Aorta (tissue), 5 donors: ENCODE measurements at regions of chr6 and their contacts with region 1.

Region 1: GRCh38 chr6:125974214-125974866 is 12.0 kb upstream of the TRMT11 start:
- DNase-seq: no peak
- ATAC-seq: no peak
- H3K4me3 ChIP-seq: no peak overlapping the region
- H3K27ac ChIP-seq: no peak overlapping the region
- H3K4me1 ChIP-seq: no peaks in the 10 kb centered on the region
- H3K27me3 ChIP-seq: no peaks in the 10 kb centered on the region

Region 2: GRCh38 chr6:125537090-125537489 is 437.2 kb before region 1 on chr6:
- intact Hi-C with region 1: no loop called
- DNase-seq: no peak
- ATAC-seq: no peak
- H3K4me3 ChIP-seq: no peak overlapping the region
- H3K27ac ChIP-seq: no peak overlapping the region
- H3K4me1 ChIP-seq: no peaks in the 10 kb centered on the region
- H3K27me3 ChIP-seq: peaks cover 0 to 3% of the 10 kb centered on the region in 2 donors

Region 3: DNA sequence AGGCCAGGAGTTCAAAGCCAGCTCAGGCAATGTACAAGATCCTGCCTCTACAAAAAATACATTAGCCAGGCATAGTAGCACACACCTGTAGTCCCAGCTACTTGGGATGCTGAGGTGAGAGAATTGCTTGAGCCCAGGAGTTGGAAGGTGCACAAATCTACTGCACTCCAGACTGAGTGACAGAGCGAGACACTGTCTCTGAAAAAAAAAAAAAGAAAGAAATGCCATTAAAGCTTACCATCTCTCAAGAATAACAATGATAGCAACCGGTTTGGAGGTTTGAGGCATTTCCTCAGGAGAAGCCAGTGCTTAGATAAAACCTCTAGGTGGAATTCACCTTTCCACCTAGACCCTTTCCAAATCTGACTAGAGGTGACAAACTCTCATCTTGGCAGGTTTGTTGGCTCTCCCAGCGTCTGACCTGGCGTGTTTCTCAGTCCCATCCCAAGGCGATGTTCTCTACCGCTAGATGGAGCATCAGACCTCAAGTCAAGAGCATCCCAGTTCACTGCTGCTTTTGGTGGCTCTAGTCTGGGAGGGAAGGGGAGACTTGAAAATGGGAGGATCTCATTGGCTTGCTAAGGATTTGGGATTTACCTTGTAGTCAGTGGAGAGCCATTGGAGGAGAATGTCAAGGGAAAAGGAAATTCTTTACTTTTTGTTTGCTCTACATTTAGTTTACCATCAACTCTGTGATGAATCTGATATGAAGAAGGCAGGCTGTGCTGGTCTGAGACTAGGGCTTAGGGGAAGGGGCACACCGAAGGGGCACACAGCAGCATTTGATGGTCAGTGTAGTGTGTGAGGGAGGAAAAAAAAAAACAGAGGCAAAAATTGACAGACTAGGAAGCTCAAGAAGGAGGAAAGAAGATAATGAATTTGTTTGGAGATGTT is 115.7 kb before region 1 on chr6:
- intact Hi-C with region 1: loop called in 1 of 2 experiments (anchors 5 kb)
- DNase-seq: peak in 1 of 2 donors; percentile 74
- ATAC-seq: peak; percentile 76
- H3K4me3 ChIP-seq: no peak overlapping the region
- H3K27ac ChIP-seq: no peak overlapping the region
- H3K4me1 ChIP-seq: no peaks in the 10 kb centered on the region
- H3K27me3 ChIP-seq: no peaks in the 10 kb centered on the region

Region 4: DNA sequence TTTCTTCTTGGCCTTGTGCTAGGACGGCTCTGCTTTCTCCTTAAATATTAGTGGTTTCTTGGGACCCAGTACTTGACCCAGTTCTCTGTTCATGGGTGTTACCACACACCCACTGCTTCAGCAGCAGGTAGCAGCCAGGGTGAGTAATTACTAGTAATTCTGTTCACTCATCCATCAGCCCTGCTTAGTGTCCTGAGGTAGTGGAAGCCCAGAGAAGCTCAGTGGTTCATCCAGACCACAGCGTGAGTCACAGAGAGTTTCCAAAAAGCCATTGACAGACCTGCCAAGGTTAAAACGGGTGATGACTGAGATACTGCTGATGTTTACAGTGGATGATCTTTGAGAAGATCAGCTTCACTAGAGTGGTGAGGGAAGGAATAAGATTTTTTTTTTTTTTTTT is 69.5 kb before region 1 on chr6:
- intact Hi-C with region 1: no loop called
- DNase-seq: no peak
- ATAC-seq: no peak
- H3K4me3 ChIP-seq: no peak overlapping the region
- H3K27ac ChIP-seq: no peak overlapping the region
- H3K4me1 ChIP-seq: no peaks in the 10 kb centered on the region
- H3K27me3 ChIP-seq: no peaks in the 10 kb centered on the region